H1 (cell line): ENCODE measurements at regions of chr12 and their contacts with region 1.

Region 1: GRCh38 chr12:56258057-56258819 is at the start of gene ANKRD52:
- DNase-seq: peak in 1 of 2 experiments; percentile 89
- H3K4me3 ChIP-seq: peak within 1 kb of the TSS; percentile 60 to 96 (median 88)
- H3K27ac ChIP-seq: no peak within 1 kb of the TSS
- H3K4me1 ChIP-seq: peaks cover 8 to 17% (median 13%) of the 10 kb centered on the region in 4 experiments
- H3K27me3 ChIP-seq: no peaks in the 10 kb centered on the region
- CTCF ChIP-seq: peak; percentile 67 to 97 (median 83)
- EP300 ChIP-seq: peak in 1 of 2 experiments; percentile 23; a peak in 1 of 3 replicates
- POLR2A ChIP-seq: peak in 1 of 2 experiments; percentile 28; a peak in 2 of 3 replicates
- RAD21 ChIP-seq: peak in 1 of 2 experiments; percentile 38; a peak in 2 of 4 replicates
- total RNA-seq, gene ANKRD52: 34.1 and 36.3 TPM in 2 replicates

Region 2: DNA sequence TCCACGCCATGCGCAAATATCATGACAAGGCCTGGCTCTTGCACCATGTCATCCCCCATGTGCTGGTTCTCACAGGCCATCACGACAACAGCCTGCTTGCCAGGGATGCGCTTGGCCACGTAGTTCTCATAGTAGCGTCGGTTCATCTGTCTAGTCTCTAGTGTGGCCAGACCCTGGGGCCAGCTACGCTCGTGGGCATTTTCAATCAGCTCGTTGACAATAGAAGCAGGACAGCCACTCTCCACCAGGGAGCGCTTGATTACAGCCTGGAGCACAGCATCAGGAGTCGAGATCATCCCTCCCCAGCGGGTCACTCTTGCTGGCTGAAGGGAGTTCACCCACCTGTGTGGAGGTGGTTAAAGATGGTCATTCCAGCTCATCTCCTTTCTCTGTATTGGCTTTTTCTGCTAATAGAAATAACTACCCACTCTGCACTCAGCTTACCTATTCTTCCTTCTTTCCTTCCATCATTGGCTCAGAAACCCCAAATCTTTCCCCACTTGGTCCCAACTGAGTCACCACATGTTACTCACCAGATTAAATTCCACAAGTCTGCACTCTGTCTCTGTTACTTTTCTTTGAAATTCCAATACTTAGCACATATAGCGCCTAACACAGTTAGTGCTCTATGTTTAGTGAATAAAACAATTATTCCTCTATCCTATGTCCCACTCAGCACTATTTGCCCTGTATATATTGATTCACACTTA is 51.6 kb before region 1 on chr12:
- CTCF ChIA-PET with region 1: interaction called, 28 read pairs
- POLR2A ChIA-PET with region 1: interaction called, 11 read pairs
- DNase-seq: peak in 1 of 2 experiments; percentile 84
- H3K4me3 ChIP-seq: no peak overlapping the region
- H3K27ac ChIP-seq: no peak overlapping the region
- H3K4me1 ChIP-seq: no peaks in the 10 kb centered on the region
- H3K27me3 ChIP-seq: no peaks in the 10 kb centered on the region
- CTCF ChIP-seq: peak; percentile 78 to 91 (median 85)
- EP300 ChIP-seq: no peak
- POLR2A ChIP-seq: 0 out of 3 replicates have a peak, but pooled peaks of 1 of the 2 experiments have one; percentile 5
- RAD21 ChIP-seq: peak; percentile 68 to 74

Region 3: GRCh38 chr12:56230432-56231183 is 27.6 kb before region 1 on chr12:
- CTCF ChIA-PET with region 1: interaction called, 22 read pairs
- POLR2A ChIA-PET with region 1: interaction called, 8 read pairs
- DNase-seq: no peak
- H3K4me3 ChIP-seq: no peak overlapping the region
- H3K27ac ChIP-seq: no peak overlapping the region
- H3K4me1 ChIP-seq: peaks cover 0 to 6% (median 0%) of the 10 kb centered on the region in 4 experiments; a peak in 3 of 7 replicates
- H3K27me3 ChIP-seq: no peaks in the 10 kb centered on the region
- CTCF ChIP-seq: no peak
- EP300 ChIP-seq: no peak
- POLR2A ChIP-seq: no peak
- RAD21 ChIP-seq: no peak

Region 4: GRCh38 chr12:56243731-56244181 is 14.5 kb before region 1 on chr12:
- CTCF ChIA-PET with region 1: interaction called, 33 read pairs
- POLR2A ChIA-PET with region 1: interaction called, 21 read pairs
- DNase-seq: no peak
- H3K4me3 ChIP-seq: no peak overlapping the region
- H3K27ac ChIP-seq: no peak overlapping the region
- H3K4me1 ChIP-seq: no peaks in the 10 kb centered on the region
- H3K27me3 ChIP-seq: no peaks in the 10 kb centered on the region
- CTCF ChIP-seq: no peak
- EP300 ChIP-seq: no peak
- POLR2A ChIP-seq: no peak
- RAD21 ChIP-seq: no peak

Region 5: DNA sequence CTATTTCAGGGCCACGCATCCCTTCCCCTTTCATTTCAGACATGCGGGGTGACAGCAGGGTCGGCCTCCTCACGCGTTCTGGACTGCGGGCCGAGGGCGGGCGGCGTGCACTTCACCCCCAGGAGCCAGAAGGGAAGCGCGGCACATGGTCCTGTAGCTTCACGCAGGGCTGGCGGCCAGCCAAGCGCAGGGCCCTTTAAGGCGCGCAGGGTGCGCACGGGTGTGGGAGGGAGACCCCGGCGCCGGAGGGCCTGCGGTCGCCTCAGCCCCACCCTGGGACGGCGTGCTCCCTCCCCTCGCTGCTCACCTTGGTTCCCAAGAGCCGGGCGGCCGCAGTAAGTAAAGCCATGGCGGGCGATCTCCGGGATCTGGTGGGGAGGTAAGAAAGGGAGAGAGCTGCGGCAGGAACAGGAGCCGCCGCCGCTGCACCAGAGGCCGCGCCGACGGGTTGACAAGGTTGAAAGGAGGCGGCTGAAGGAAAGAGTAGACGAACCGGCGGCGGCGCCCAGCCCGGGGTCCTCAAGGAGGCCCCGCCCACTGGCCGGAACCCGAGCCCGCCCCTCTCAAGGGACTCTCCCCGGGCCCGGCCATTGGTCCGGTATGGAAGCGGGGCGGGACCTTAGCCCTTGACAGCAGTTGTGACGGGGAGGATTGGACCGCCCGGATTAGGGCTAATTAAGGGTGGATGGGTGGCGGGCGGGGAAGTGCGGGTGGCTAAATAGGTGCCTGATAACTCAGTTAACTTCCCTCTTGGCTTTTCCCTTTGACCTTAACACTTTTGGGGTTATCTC is 41.8 kb after region 1 on chr12 and contains the start of gene CS:
- CTCF ChIA-PET with region 1: interaction called, 4 read pairs
- POLR2A ChIA-PET with region 1: interaction called, 14 read pairs
- DNase-seq: peak; percentile 92 to 97
- H3K4me3 ChIP-seq: peak within 1 kb of the TSS; percentile 95 to 99 (median 96)
- H3K27ac ChIP-seq: peak within 1 kb of the TSS; percentile 78
- H3K4me1 ChIP-seq: peaks cover 0 to 9% (median 2%) of the 10 kb centered on the region in 4 experiments; a peak in 4 of 7 replicates
- H3K27me3 ChIP-seq: no peaks in the 10 kb centered on the region
- CTCF ChIP-seq: no peak
- EP300 ChIP-seq: no peak
- POLR2A ChIP-seq: peak; percentile 4 to 70; a peak in 2 of 3 replicates
- RAD21 ChIP-seq: no peak
- total RNA-seq, gene CS: 238 and 243 TPM in 2 replicates